OCI-LY7 (cell line): ENCODE measurements at regions of chr17 and their contacts with region 1.

Region 1: GRCh38 chr17:76384222-76384986 is at the start of gene SPHK1:
- DNase-seq: peak; percentile 79
- H3K4me3 ChIP-seq: peak within 1 kb of the TSS; percentile 64
- H3K27ac ChIP-seq: no peak within 1 kb of the TSS
- H3K4me1 ChIP-seq: peaks cover 29% of the 10 kb centered on the region
- CTCF ChIP-seq: no peak
- total RNA-seq, gene SPHK1: 0.28 and 0.36 TPM in 2 replicates

Region 2: GRCh38 chr17:76264755-76265596 is 119.4 kb before region 1 on chr17 and contains the start of gene UBALD2:
- CTCF ChIA-PET with region 1: no interaction called
- POLR2A ChIA-PET with region 1: no interaction called
- intact Hi-C with region 1: no loop called
- DNase-seq: peak; percentile 100
- H3K4me3 ChIP-seq: peak within 1 kb of the TSS; percentile 89
- H3K27ac ChIP-seq: peak within 1 kb of the TSS; percentile 90
- H3K4me1 ChIP-seq: peaks cover 83% of the 10 kb centered on the region
- CTCF ChIP-seq: no peak
- total RNA-seq, gene UBALD2: 70.9 and 86.4 TPM in 2 replicates

Region 3: DNA sequence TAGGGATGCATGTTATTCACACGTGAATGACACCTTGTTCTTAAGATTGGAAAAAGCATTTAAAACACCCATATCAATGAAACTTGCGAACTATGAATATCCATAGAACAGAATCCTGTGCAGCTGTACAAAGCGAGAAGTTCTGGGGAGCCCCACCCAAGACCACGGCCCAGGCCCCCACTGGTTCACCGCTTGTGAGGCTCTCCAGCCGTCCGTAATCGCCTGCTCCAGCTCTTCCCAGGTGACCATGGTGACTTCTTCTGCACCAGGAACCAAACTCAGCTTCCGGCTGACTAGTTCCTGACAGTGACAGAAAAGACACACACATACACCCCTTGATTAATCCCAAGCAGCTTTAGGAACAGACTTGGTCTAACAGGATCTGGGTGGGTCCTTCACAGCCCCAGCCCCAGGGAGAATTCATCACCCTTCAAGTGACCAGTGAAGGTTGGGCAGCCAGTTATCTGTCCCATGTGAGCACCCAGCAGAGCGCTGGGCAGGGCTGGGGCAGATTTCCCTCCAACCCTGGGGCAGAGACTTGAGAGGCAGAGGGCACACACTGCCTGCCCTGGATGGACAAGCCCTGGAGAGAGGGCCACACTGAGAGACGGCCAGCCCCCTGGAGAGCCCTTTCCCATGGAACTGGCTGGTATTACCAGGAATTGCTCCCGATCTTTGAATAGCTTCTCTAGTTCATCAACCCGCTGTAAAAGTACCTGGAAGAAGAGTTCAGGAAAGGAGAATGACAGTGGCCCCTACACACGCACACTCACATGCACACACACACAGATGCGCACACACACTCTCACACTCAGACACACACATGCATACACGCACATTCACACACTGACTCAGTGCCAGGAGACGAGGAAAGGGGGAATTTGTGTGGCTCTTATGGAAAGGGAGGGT is 79.9 kb before region 1 on chr17:
- CTCF ChIA-PET with region 1: no interaction called
- POLR2A ChIA-PET with region 1: no interaction called
- intact Hi-C with region 1: loop called (anchors 1 kb)
- DNase-seq: no peak
- H3K4me3 ChIP-seq: no peak overlapping the region
- H3K27ac ChIP-seq: no peak overlapping the region
- H3K4me1 ChIP-seq: peaks cover 5% of the 10 kb centered on the region
- CTCF ChIP-seq: no peak

Region 4: DNA sequence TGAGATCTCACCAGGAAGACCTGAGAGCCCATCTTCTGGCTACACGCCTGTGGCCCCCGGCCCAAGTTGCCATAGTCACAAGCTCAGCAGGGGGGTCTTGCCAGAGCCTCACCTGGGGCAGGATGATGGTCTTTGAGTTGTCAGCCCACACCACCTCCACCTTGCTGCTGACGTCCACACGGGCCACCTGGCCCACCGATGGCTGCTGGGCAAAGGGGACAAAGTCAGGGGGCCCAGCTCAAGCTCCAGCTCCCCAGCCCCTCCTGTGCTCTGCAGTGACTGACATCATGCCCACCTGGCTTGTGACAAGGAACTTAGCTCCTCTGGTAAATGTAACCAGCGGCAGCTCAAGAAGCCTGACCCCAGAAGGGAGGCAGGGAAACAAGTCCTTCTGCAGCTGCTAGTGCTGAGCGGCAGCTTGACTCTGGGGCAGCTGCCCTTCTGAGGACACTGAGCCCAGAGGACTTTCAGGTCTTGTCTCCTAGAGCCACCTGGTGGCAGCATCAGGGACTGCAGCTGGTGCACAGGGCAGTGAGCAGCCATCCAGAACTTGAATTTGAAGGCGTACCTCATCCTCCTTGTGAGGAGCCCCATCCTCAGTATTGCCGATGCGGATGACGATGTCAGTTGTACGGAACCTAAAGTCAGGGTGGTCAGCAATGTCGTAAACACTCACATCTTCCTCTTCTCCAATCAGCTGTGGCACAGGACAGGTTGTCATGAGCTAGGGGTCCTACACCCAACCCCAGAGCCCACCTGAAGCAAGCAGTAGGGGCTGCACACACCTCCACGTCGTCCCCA is 13.5 kb after region 1 on chr17:
- CTCF ChIA-PET with region 1: interaction called, 10 read pairs
- POLR2A ChIA-PET with region 1: no interaction called
- intact Hi-C with region 1: no loop called
- DNase-seq: peak; percentile 88
- H3K4me3 ChIP-seq: no peak overlapping the region
- H3K27ac ChIP-seq: no peak overlapping the region
- H3K4me1 ChIP-seq: no peaks in the 10 kb centered on the region
- CTCF ChIP-seq: peak; percentile 100

Region 5: GRCh38 chr17:76446449-76447231 is 62.2 kb after region 1 on chr17:
- CTCF ChIA-PET with region 1: no interaction called
- POLR2A ChIA-PET with region 1: no interaction called
- intact Hi-C with region 1: no loop called
- DNase-seq: no peak
- H3K4me3 ChIP-seq: no peak overlapping the region
- H3K27ac ChIP-seq: no peak overlapping the region
- H3K4me1 ChIP-seq: peaks cover 94% of the 10 kb centered on the region
- CTCF ChIP-seq: no peak

Region 6: DNA sequence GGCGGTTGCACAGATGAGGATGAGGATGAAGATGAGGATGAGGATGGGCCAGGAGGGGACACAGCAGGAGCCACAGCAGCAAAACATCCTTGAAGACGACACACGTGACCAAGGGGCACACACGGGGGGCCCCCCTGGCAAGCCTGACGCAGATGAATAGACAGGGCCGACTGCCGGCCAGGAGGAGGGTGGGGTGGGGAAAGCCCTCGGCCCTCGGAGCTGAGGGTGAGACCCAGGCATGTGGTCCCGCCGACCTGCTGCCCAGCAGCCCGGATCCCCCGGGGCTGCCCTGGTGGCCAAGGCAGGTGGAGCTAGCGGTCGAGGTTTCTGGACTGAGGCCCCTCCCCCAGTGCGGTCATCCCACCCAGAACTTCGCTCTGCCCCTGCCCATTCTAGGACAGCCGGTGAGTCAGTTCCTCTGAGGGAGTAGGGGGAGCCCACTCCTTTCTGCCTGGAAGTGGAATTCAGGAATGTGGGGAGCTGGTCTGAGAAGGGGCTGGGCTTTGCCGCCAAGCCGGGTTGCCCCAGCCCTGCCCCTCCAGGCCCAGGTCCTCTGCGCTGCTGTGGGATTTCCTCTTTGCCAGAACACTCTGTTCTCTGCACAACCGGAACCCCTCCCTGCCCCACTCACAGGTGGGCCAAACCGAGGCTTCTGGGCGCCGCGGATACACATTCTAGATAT is 143.2 kb after region 1 on chr17:
- CTCF ChIA-PET with region 1: no interaction called
- POLR2A ChIA-PET with region 1: no interaction called
- intact Hi-C with region 1: no loop called
- DNase-seq: peak; percentile 92
- H3K4me3 ChIP-seq: peak overlapping the region; percentile 68
- H3K27ac ChIP-seq: peak overlapping the region; percentile 94
- H3K4me1 ChIP-seq: peaks cover 52% of the 10 kb centered on the region
- CTCF ChIP-seq: no peak